Cardiac septum (tissue), 1 donor: ENCODE measurements at regions of chr2 and their contacts with region 1.

Region 1: GRCh38 chr2:189674374-189675112 is at the start of gene ANKAR:
- DNase-seq: peak; percentile 94
- total RNA-seq, gene ANKAR: 10.3 TPM

Region 2: GRCh38 chr2:189549449-189549832 is 125.1 kb before region 1 on chr2:
- intact Hi-C with region 1: no loop called
- DNase-seq: no peak

Region 3: GRCh38 chr2:189661148-189661956 is 13.2 kb before region 1 on chr2 and contains the start of gene ASNSD1:
- intact Hi-C with region 1: loop called (anchors 1 kb)
- DNase-seq: peak; percentile 99
- total RNA-seq, gene ASNSD1: 27.7 TPM

Region 4: DNA sequence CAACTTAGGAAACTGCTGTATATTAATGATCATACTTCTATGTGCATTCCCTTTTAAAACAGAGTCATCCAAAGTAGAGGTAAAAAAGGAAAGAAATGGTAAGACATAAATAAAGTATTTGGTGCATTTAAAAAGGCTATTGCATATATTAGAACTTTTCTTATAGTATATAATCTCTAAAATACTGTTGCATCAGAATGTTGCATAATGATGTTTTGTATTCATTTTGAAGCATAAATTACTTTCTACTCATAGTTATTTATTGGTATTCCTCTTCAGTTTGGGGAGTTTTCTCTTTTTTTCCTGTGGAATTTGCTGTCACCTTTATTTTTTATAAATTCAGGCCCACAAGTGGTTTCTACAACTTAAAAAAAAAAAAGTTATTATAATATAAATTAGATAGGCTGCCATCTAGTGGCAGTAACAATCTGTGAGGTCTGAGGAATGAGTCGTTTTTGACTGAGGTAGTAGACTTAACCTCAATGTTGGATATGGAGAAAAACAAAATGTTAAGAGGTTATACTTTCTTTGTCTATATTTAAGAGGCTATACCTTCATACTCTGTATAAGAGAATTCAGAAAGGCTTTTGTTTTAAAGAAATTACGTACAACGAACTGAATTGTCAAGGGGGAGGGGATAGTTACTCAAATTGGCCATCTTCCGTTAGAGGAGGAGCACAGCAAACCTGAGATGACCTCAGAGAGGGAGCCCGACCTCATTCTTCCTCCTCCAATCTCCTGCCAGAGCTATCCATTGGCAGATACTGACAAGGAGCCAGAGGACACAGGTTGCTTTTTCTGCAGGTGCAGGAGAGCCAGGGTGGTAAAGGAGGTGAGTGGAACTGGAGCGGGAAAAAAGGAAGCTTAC is 23.7 kb after region 1 on chr2:
- intact Hi-C with region 1: loop called (anchors 2 kb)
- DNase-seq: no peak

Region 5: GRCh38 chr2:189762551-189763298 is 88.2 kb after region 1 on chr2 and contains the start of gene OSGEPL1:
- intact Hi-C with region 1: loop called (anchors 2 kb)
- DNase-seq: peak; percentile 96
- total RNA-seq, gene OSGEPL1: 5.4 TPM